Posterior cingulate gyrus (tissue), 11 donors: ENCODE measurements at regions of chr9 and their contacts with region 1.

Region 1: DNA sequence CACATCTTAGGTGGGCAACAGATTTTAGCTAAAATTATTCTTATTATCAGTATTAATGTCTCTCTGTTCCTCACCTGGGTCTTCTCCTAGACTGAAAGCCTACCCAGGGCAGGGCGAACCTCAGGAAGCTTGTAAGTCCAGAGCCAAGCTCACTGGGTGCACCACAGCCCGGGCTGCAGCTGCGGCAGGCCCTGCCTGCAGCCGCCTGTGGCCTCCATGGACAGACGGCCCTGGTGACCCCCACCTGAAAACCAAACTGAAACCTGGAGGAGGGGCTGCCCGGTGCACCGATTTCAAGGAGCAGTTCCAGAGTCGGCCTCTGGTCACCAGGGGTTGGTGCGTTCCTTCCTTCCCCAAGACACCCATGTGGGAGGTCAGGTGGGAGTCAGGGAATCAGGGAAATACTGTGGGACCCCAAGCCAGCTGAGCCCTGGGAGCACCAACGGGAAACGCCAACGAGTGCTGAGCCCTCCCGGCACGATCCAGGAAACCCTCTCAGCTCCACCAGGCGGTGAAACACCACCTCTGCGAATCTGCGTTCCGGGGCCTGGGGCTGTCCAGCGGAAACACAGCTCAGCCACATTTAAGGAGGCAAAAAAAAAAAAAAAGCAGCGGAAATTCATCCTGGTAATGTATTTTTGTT is 68.6 kb upstream of the PPP1R26 start:
- DNase-seq: peak in 2 of 10 donors; percentile 54 to 77

Region 2: DNA sequence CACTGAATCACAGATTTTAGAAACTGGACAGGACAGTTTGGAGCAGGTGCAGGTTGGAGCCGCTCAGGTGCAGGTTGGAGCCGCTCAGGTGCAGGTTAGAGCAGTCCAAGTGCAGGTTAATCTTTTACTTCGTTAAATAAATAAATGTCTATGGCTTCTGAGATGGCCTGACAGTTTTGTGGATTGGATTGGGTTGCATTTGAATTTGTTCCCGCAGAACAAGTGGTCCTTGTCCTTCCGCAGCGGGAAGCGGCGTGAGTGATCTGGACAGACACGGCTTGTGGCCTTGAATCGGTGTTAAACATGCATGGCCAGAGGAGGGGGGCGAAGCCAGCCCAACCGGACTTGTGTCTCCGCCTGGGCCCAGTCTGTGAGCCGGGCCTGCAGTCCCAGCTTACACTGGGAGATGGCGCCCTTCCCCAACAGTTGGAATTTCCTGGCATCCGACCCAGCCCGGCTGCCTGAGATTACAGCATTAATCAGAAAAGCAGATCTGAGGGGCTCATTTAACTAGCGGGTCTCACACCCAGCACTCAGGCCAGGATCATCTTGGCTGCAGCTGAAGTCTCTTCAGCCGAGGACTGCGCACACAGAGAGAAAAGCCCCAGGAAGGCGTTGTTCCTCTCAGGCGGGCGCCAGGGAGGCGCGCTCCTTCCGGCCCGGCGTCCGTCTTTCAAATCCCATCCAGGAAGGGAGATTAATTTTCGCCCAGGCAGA is 325.0 kb before region 1 on chr9:
- intact Hi-C with region 1: loop called (anchors 1 kb)
- DNase-seq: peak; percentile 73 to 98 (median 88)